ENCODE measurements at regions of chr14 and their contacts with region 1.

Region 1: DNA sequence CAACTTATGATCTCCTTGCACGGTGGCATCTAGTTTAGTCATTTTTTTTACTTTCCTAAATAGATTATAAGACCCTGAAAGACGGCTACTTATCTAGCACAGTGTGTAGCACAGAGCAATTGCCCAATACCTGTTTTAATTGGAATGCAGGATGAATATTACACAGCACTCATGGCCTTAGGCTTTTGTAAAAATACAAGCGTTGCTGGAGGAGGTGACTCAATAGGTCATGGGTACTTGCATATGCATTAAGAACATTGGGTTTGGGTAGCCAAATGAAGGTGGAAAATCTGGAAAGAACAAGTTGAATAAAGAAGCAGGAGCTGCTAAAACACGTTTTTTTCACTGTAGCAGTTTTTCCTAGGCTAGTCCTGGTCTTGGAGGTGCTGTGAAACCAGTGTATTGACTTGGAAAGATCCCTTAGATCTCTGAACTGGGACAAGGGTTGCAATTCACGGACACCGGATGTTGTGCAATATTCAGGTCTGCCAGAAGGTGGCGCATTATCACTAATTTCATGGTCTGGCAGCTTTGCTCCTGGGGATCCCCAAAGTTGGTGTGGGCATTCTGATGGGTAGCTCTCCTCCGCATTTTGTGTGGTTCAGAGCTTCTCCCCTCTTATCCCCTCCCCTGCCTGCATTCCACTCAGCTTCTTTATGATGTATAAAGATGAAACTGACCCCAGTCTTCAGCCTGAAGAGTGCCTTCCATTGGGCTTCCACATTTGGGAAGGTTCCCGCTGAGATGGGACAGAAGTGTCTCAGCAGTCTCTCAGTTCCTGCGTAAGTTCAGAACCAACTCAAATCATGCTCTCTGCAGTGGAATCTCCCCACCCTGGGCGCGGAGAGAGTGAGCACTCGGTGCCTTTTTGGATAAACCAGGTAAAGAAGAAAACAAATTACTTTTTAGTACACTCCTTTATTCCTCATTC is 278.3 kb downstream of the NRXN3 start:
- DNase-seq: peak; percentile 51
- H3K4me3 Mint-ChIP-seq: no peak overlapping the region
- H3K27ac Mint-ChIP-seq: no peak overlapping the region
- H3K4me1 Mint-ChIP-seq: no peaks in the 10 kb centered on the region
- H3K27me3 Mint-ChIP-seq: peaks cover 2% of the 10 kb centered on the region

Region 2: DNA sequence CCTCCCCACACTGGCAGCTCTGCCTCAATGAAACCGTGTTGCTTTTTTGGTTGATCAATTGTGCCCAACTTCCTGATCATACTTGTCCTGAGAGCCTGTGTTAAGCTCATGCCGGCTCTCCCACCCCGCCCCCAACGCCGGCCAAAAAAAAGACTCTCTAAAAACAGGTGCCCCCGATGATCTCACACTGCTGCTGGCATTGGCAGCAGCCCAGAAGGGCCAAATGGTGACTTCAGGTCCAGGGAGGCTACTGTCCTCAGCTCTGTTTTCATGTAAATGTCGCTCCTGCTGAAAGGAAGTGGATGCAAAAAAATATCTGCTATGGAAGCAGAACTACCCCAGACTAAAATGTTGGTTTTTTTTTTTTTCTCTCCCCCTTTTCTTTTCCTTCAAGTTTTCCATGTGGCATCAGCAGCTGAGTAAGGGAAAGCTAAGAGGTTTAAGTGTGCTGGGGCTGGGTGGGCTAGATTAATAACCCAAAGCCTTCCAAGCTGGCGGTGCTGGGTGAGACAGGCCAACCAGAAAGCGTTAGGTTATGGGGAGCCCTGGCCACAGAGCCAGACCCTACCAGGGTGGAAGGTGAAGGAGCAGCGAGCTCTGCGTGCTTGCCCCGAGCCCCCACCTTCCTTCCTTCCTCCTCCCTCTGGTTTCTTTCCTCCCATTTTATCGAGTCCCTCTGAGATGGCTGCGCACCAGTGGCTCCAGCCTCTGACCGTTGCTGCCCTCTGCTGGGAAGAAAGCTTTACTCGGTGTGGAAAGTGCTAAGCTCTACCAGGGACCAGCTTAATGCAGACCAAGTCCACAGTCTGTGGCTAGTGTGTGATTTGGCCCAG is 117.8 kb after region 1 on chr14:
- CTCF ChIA-PET with region 1: interaction called, 8 read pairs
- POLR2A ChIA-PET with region 1: no interaction called
- intact Hi-C with region 1: loop called (anchors 1 kb)
- DNase-seq: peak; percentile 75
- H3K4me3 Mint-ChIP-seq: no peak overlapping the region
- H3K27ac Mint-ChIP-seq: no peak overlapping the region
- H3K4me1 Mint-ChIP-seq: no peaks in the 10 kb centered on the region
- H3K27me3 Mint-ChIP-seq: no peaks in the 10 kb centered on the region

Region 3: GRCh38 chr14:78697341-78697740 is 248.9 kb after region 1 on chr14:
- CTCF ChIA-PET with region 1: no interaction called
- POLR2A ChIA-PET with region 1: no interaction called
- intact Hi-C with region 1: loop called (anchors 5 kb)
- DNase-seq: no peak
- H3K4me3 Mint-ChIP-seq: no peak overlapping the region
- H3K27ac Mint-ChIP-seq: no peak overlapping the region
- H3K4me1 Mint-ChIP-seq: no peaks in the 10 kb centered on the region
- H3K27me3 Mint-ChIP-seq: no peaks in the 10 kb centered on the region